ENCODE measurements at regions of chr7 and their contacts with region 1.

Region 1: GRCh38 chr7:105876091-105876963 is at the start of gene ATXN7L1:
- DNase-seq: peak; percentile 80
- H3K4me3 Mint-ChIP-seq: peak within 1 kb of the TSS; percentile 96
- H3K27ac Mint-ChIP-seq: peak within 1 kb of the TSS; percentile 90
- H3K4me1 Mint-ChIP-seq: peaks cover 42% of the 10 kb centered on the region
- H3K27me3 Mint-ChIP-seq: peaks cover 35% of the 10 kb centered on the region
- total RNA-seq, gene ATXN7L1: 7.2 and 8.5 TPM in 2 replicates

Region 2: DNA sequence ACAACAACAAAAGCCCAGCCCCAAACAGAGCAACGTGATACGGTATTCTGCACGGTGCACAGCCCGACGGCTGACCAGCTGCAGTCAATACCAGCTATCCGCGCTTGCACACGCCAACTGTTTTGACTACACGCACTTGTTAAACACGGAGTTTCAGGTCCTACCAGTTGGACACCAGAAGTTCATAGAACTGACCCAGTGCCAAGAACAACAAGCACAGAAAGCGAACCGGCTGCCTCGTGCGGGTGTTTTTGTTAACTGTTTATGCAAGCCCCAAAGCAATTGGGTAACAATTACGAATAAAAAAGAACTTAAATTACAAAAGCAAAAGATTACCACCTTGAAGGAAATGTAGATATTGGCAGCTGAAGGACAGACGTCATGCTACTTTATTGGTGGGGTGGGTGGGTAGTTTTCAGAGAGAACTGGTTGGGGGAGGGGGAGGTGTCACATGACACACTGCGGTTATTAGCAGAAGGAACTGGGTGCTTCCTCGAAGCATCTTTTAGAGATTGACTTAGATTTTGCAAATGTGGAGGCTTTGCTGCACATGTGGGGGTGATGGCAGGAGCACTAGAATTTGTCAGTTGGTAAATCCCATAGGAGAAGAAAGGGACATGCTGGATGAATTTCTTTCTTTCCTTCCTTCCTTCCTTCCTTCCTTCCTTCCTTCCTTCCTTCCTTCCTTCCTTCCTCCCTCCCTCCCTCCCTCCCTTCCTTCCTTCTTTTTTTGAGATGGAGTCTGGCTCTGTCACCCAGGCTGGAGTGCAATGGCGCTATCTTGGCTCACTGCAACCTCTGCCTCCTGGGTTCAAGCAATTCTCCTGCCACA is 184.4 kb before region 1 on chr7:
- intact Hi-C with region 1: loop called (anchors 1 kb)
- DNase-seq: no peak
- H3K4me3 Mint-ChIP-seq: peak overlapping the region; percentile 89
- H3K27ac Mint-ChIP-seq: peak overlapping the region; percentile 89
- H3K4me1 Mint-ChIP-seq: peaks cover 35% of the 10 kb centered on the region
- H3K27me3 Mint-ChIP-seq: no peaks in the 10 kb centered on the region

Region 3: GRCh38 chr7:105766421-105767073 is 109.8 kb before region 1 on chr7:
- intact Hi-C with region 1: loop called (anchors 1 kb)
- DNase-seq: no peak
- H3K4me3 Mint-ChIP-seq: no peak overlapping the region
- H3K27ac Mint-ChIP-seq: no peak overlapping the region
- H3K4me1 Mint-ChIP-seq: peaks cover 24% of the 10 kb centered on the region
- H3K27me3 Mint-ChIP-seq: peaks cover 22% of the 10 kb centered on the region

Region 4: GRCh38 chr7:105890290-105890997 is 14.1 kb after region 1 on chr7:
- intact Hi-C with region 1: loop called (anchors 1 kb)
- DNase-seq: no peak
- H3K4me3 Mint-ChIP-seq: no peak overlapping the region
- H3K27ac Mint-ChIP-seq: no peak overlapping the region
- H3K4me1 Mint-ChIP-seq: peaks cover 10% of the 10 kb centered on the region
- H3K27me3 Mint-ChIP-seq: peaks cover 9% of the 10 kb centered on the region

Region 5: DNA sequence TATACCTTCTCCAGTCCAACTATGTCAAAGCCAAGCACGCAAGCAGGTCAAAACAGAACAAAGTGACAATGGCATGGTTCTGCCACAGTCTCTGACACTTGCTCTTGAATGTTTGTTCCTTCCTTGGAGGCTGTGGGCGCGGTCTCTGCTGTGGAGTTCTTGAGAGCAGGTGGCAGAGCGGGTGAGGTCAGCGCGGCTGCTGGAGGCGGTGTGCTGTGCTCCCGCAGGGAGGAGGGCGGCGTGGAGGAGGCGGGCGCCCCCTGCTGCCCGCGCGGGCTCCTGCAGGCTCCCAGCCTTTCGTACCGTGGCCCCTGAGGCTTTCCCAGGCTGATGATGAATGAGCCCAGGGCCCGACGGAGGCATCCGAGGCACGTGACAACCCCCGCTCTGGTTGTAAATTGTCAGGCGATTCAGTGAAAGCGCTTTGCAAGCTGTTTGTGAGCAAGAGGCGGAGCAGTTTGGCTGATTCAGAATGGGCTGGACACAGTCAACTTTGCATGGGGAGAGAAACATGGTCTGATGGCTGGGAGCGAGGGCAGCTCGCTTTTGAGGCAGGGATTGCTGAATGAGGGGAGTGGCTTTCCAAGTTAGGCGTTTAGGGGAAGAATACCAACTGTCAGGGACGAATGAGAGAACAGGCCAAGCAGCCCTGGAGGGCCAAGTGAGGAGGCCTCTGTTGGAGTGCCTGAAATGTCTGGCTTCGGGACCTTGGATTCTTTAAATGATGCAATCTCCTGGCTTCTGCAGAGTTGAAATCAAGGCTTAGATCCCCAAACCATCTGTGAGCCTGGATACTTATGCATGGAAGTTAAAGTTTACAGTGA is 133.3 kb after region 1 on chr7:
- intact Hi-C with region 1: loop called (anchors 1 kb)
- DNase-seq: peak; percentile 72
- H3K4me3 Mint-ChIP-seq: no peak overlapping the region
- H3K27ac Mint-ChIP-seq: peak overlapping the region; percentile 32
- H3K4me1 Mint-ChIP-seq: peaks cover 15% of the 10 kb centered on the region
- H3K27me3 Mint-ChIP-seq: peaks cover 33% of the 10 kb centered on the region

Region 6: GRCh38 chr7:106041140-106041717 is 164.9 kb after region 1 on chr7:
- intact Hi-C with region 1: loop called (anchors 2 kb)
- DNase-seq: no peak
- H3K4me3 Mint-ChIP-seq: no peak overlapping the region
- H3K27ac Mint-ChIP-seq: no peak overlapping the region
- H3K4me1 Mint-ChIP-seq: peaks cover 15% of the 10 kb centered on the region
- H3K27me3 Mint-ChIP-seq: peaks cover 20% of the 10 kb centered on the region

Region 7: DNA sequence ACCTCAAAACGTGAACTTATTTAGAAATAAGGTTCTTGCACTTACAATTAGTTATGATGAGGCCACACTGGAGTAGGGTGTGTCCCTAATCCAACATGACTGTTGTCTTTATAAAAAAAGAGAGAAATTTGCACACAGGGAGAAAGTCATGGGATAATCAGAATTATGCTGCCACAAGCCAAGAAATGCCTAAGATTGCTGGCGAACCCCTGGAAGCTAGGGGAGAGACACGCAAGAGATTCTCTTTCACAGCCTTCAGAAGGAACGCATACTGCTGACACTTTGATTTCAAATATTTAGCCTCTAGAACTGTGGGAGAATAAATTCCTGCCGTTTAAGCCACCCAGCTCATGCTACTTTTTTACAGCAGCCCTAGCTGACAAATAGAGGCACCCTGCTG is 646.4 kb after region 1 on chr7:
- intact Hi-C with region 1: no loop called
- DNase-seq: no peak
- H3K4me3 Mint-ChIP-seq: no peak overlapping the region
- H3K27ac Mint-ChIP-seq: no peak overlapping the region
- H3K4me1 Mint-ChIP-seq: peaks cover 13% of the 10 kb centered on the region
- H3K27me3 Mint-ChIP-seq: peaks cover 16% of the 10 kb centered on the region

Measured in activated T-helper 1 cell treated with anti-CD3 and anti-CD28 coated beads, Interleukin-12 subunit alpha, Interleukin-12 subunit beta, Interleukin-2, Interleukin-4 antibody, amounts not matched to agents 30 ng/mL and 10 ng/mL and 1 ng/mL, durations not matched to agents 14 hours and 24 hours and 36 hours (primary cell).